ENCODE measurements at regions of chr12 and their contacts with region 1.

Region 1: DNA sequence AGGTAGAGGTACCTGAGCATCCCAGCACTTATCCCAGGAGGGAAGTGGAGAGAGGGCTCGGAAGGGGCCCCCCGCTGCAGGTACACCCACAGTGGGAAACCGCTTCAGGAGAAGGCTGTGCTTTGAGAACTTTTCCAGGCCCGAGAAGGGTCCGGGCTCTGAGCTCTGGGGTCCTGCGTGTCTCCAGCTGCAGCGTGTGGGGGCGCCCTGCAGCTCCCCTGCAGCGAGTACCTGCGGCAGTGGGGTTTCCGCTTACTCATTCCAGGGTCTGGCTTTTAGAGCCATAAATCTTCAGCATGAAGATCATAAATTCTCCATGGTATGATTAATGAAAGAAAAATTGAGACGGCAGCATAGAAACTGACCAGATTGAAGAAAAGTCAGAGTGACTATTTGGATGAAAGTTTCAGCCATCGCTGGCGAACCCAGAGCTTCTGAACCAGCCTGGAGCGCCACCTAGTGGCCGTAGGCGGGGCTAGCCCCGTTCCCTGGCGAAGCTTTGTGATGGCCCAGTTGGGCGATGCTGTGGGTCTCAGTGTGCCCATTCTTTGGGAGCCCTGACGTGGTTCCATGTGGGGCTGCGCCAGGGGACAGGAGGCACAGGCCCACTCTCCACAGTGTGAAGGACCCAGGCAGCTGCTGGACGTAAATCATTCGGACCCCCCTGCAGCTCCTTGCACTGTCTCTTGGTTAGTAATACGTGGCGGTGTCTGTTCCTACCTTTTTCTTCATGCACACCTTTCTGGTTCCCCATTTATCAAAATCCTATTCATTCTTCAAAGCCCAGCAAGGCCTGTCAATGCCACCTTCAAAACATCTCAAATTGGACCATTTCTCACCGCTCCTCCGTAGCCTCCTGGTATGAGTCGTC is 198.2 kb downstream of the TSPAN9 start:
- DNase-seq: peak; percentile 30 to 54 (median 49)
- H3K4me3 ChIP-seq: no peak overlapping the region
- H3K4me3 Mint-ChIP-seq: no peak overlapping the region
- H3K27ac ChIP-seq: no peak overlapping the region
- H3K27ac Mint-ChIP-seq: no peak overlapping the region
- H3K4me1 ChIP-seq: no peaks in the 10 kb centered on the region
- H3K4me1 Mint-ChIP-seq: peaks cover 2% of the 10 kb centered on the region
- H3K27me3 ChIP-seq: peaks cover 0 to 9% of the 10 kb centered on the region in 2 donors
- H3K27me3 Mint-ChIP-seq: peaks cover 12 to 47% (median 39%) of the 10 kb centered on the region in 3 donors
- CTCF ChIP-seq: peak; percentile 98

Region 2: DNA sequence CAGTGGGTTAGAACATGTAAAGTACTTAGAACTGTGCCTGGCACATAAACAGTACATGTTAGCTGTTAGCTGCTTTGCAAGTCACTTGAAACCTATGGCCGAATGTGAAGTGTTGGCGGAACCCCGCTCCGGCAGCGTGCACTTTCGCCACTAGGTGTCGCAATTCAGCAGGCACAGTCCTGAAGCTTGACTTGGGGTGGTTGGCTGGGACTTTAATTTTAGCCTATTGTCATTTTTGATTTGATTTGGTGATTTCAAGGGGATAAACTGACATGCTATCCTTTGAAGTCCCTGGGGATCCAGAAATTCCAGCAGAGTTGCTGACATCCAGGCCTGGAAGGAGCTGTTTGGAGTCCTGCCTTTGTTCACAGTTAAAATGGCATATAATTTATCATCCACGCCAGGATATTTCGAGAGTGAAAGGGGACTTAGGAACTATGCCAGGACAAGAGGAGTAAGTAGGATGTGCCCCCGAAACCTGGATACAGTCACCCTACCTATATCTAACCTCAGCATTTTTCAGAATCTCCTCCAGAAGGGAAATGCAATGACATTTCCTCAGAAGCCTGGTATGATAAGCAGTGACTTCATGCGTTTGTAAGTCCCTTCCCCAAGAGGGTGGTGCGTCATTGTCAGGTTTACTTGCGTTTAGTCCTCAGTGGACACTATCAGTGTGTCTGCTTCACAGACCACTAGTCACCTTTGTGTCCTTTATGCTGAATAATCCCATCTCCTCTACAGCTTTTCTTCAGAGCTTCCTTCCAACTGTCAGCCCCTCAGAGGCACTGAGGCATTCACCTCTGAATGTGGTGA is 201.8 kb before region 1 on chr12:
- intact Hi-C with region 1: loop called (anchors 2 to 5 kb)
- DNase-seq: peak; percentile 68 to 70 (median 69)
- H3K4me3 ChIP-seq: no peak overlapping the region
- H3K4me3 Mint-ChIP-seq: no peak overlapping the region
- H3K27ac ChIP-seq: no peak overlapping the region
- H3K27ac Mint-ChIP-seq: peak overlapping the region in 1 of 7 donors; percentile 73
- H3K4me1 ChIP-seq: peaks cover 12 to 15% of the 10 kb centered on the region in 2 donors
- H3K4me1 Mint-ChIP-seq: peaks cover 15% of the 10 kb centered on the region
- H3K27me3 ChIP-seq: peaks cover 21 to 40% of the 10 kb centered on the region in 2 donors
- H3K27me3 Mint-ChIP-seq: peaks cover 32 to 62% (median 48%) of the 10 kb centered on the region in 3 donors
- CTCF ChIP-seq: peak; percentile 98

Region 3: DNA sequence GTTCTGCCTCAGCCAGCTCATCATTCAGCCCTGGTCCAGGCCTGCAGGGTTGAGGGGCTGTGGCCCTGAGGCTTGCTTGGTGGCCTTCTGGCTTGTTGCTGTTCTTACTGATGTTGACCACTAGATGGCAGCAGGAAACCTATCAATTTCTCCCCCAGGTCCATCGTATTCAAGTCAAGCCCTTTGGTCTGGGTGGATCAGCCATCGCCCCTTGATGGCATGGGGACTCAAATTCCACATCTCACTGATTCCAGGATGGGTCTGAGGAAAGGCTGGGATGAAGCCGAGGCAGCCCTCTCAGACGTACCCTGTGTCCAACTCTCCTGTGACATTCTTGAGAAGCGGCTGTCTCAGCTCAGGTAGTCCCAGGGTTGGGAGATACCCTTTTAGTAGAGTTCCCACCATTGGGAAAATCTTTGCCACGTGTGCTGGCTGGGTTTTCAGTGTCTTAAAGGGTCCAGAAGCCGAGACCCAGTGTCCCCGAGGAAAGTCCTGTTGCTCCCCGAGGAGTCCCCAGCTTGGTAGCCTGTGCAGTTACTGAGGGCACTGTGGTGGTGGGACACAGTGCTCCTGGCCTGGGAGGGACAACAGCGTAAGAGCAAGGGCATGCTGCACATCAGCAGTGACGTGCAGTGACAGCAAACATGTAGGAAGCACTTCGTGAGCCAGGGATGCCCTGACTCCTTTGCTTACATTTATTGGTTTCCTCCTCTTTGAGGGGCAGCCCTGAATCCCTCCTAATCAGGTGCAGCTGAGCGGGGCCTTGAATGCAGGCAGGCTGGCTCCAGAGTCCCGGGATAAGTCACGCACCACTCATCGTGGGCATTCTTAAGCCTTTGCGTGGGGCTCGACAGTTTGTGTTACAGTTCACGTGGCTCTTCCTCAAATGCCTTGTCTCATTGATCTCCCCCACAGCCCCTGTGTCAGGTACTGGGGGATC is 139.6 kb before region 1 on chr12:
- intact Hi-C with region 1: loop called (anchors 1 to 2 kb)
- DNase-seq: peak; percentile 24 to 52 (median 36)
- H3K4me3 ChIP-seq: no peak overlapping the region
- H3K4me3 Mint-ChIP-seq: no peak overlapping the region
- H3K27ac ChIP-seq: no peak overlapping the region
- H3K27ac Mint-ChIP-seq: no peak overlapping the region
- H3K4me1 ChIP-seq: no peaks in the 10 kb centered on the region
- H3K4me1 Mint-ChIP-seq: no peaks in the 10 kb centered on the region
- H3K27me3 ChIP-seq: peaks cover 4 to 52% of the 10 kb centered on the region in 2 donors
- H3K27me3 Mint-ChIP-seq: peaks cover 35 to 84% (median 80%) of the 10 kb centered on the region in 3 donors
- CTCF ChIP-seq: peak; percentile 85

Measured in CD14-positive monocyte (primary cell).